Naive thymus-derived CD4-positive, alpha-beta T cell (primary cell): ENCODE measurements at regions of chr15 and their contacts with region 1.

Region 1: GRCh38 chr15:100341662-100342560 is at the start of gene ADAMTS17:
- DNase-seq: peak; percentile 80 to 96 (median 94)
- ATAC-seq: peak; percentile 98
- H3K4me3 ChIP-seq: peak within 1 kb of the TSS; percentile 69
- H3K4me3 Mint-ChIP-seq: peak within 1 kb of the TSS; percentile 59 to 88 (median 76)
- H3K27ac ChIP-seq: peak within 1 kb of the TSS; percentile 76
- H3K27ac Mint-ChIP-seq: peak within 1 kb of the TSS in 6 of 9 donors; percentile 6 to 76 (median 29)
- H3K4me1 ChIP-seq: peaks cover 4 to 6% of the 10 kb centered on the region in 2 donors
- H3K4me1 Mint-ChIP-seq: peaks cover 7 to 36% (median 28%) of the 10 kb centered on the region in 7 donors
- H3K27me3 ChIP-seq: no peaks in the 10 kb centered on the region
- H3K27me3 Mint-ChIP-seq: peaks cover 0 to 57% (median 4%) of the 10 kb centered on the region in 5 donors
- total RNA-seq, gene ADAMTS17: 2.0 to 13.5 (median 3.2) TPM

Region 2: DNA sequence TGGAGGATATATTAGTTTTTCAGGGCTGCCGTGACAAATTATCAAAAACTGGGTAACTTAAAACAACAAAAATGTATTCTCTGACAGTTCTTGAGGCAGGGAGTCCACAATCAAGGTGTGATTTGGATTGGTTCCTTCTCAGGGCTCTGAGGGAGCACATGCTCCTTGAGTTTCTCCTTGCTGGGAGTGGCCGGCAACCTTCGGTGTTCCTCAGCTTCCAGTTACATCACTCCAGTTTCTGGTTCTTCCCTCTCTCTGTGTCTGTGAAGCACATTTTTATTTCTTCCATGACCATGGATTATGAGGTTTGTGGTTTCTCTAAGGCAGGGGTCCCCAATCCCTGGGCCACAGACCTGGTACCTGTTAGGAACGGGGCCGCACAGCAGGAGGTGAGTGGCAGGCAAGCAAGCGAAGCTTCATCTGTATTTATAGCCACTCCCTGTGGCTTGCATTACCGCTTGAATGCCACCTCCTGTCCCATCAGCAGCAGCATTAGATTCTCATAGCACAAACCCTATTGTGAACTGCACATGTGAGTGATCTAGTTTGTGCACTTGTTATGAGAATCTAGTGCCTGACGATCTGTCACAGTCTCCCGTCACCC is 1066.3 kb before region 1 on chr15:
- CTCF ChIA-PET with region 1: interaction called, 12 read pairs
- POLR2A ChIA-PET with region 1: no interaction called
- intact Hi-C with region 1: loop called in 1 of 2 experiments (anchors 5 kb)
- DNase-seq: no peak
- ATAC-seq: no peak
- H3K4me3 ChIP-seq: no peak overlapping the region
- H3K4me3 Mint-ChIP-seq: no peak overlapping the region
- H3K27ac ChIP-seq: no peak overlapping the region
- H3K27ac Mint-ChIP-seq: peak overlapping the region in 1 of 9 donors; percentile 59
- H3K4me1 ChIP-seq: no peaks in the 10 kb centered on the region
- H3K4me1 Mint-ChIP-seq: peaks cover 7 to 35% (median 19%) of the 10 kb centered on the region in 7 donors
- H3K27me3 ChIP-seq: no peaks in the 10 kb centered on the region
- H3K27me3 Mint-ChIP-seq: no peaks in the 10 kb centered on the region

Region 3: GRCh38 chr15:99961011-99961441 is 380.9 kb before region 1 on chr15:
- CTCF ChIA-PET with region 1: no interaction called
- POLR2A ChIA-PET with region 1: no interaction called
- intact Hi-C with region 1: loop called in 1 of 2 experiments (anchors 1 kb)
- DNase-seq: peak in 1 of 9 donors; percentile 21
- ATAC-seq: no peak
- H3K4me3 ChIP-seq: no peak overlapping the region
- H3K4me3 Mint-ChIP-seq: no peak overlapping the region
- H3K27ac ChIP-seq: no peak overlapping the region
- H3K27ac Mint-ChIP-seq: no peak overlapping the region
- H3K4me1 ChIP-seq: no peaks in the 10 kb centered on the region
- H3K4me1 Mint-ChIP-seq: peaks cover 4 to 15% (median 11%) of the 10 kb centered on the region in 7 donors
- H3K27me3 ChIP-seq: no peaks in the 10 kb centered on the region
- H3K27me3 Mint-ChIP-seq: peaks cover 4 to 16% (median 14%) of the 10 kb centered on the region in 5 donors

Region 4: GRCh38 chr15:100211855-100212850 is 129.8 kb before region 1 on chr15:
- CTCF ChIA-PET with region 1: interaction called, 3 read pairs
- POLR2A ChIA-PET with region 1: no interaction called
- intact Hi-C with region 1: loop called in 1 of 2 experiments (anchors 10 kb)
- DNase-seq: no peak
- ATAC-seq: no peak
- H3K4me3 ChIP-seq: no peak overlapping the region
- H3K4me3 Mint-ChIP-seq: no peak overlapping the region
- H3K27ac ChIP-seq: no peak overlapping the region
- H3K27ac Mint-ChIP-seq: no peak overlapping the region
- H3K4me1 ChIP-seq: no peaks in the 10 kb centered on the region
- H3K4me1 Mint-ChIP-seq: peaks cover 0 to 7% (median 0%) of the 10 kb centered on the region in 7 donors
- H3K27me3 ChIP-seq: no peaks in the 10 kb centered on the region
- H3K27me3 Mint-ChIP-seq: no peaks in the 10 kb centered on the region

Region 5: DNA sequence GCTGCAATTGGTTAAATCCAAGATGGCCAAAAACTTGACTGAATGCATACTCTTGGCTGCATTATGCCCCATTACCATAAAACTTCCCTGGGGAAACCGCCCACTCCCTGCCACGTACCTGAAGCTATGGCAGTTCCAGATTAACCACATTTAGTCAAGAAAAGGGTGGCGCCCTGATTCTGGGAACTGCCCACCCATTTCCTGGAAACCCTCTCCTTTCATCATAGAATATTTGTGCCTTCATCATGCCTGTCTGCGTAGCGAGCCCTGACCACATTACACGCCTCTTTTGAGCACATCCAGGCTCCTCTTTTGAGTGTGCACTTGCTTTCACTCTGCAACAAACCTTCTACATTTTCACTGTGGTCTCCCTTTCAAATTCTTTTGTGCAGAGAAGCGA is 254.9 kb after region 1 on chr15:
- CTCF ChIA-PET with region 1: interaction called, 4 read pairs
- POLR2A ChIA-PET with region 1: interaction called, 4 read pairs
- intact Hi-C with region 1: loop called in 1 of 2 experiments (anchors 1 kb)
- DNase-seq: peak; percentile 52 to 97 (median 94)
- ATAC-seq: peak; percentile 93
- H3K4me3 ChIP-seq: peak overlapping the region; percentile 49
- H3K4me3 Mint-ChIP-seq: peak overlapping the region in 7 of 10 donors; percentile 69 to 87 (median 86)
- H3K27ac ChIP-seq: peak overlapping the region; percentile 91
- H3K27ac Mint-ChIP-seq: peak overlapping the region in 4 of 9 donors; percentile 96 to 98 (median 96)
- H3K4me1 ChIP-seq: peaks cover 52 to 82% of the 10 kb centered on the region in 2 donors
- H3K4me1 Mint-ChIP-seq: peaks cover 0 to 78% (median 51%) of the 10 kb centered on the region in 7 donors
- H3K27me3 ChIP-seq: no peaks in the 10 kb centered on the region
- H3K27me3 Mint-ChIP-seq: peaks cover 0 to 2% (median 0%) of the 10 kb centered on the region in 5 donors

Region 6: DNA sequence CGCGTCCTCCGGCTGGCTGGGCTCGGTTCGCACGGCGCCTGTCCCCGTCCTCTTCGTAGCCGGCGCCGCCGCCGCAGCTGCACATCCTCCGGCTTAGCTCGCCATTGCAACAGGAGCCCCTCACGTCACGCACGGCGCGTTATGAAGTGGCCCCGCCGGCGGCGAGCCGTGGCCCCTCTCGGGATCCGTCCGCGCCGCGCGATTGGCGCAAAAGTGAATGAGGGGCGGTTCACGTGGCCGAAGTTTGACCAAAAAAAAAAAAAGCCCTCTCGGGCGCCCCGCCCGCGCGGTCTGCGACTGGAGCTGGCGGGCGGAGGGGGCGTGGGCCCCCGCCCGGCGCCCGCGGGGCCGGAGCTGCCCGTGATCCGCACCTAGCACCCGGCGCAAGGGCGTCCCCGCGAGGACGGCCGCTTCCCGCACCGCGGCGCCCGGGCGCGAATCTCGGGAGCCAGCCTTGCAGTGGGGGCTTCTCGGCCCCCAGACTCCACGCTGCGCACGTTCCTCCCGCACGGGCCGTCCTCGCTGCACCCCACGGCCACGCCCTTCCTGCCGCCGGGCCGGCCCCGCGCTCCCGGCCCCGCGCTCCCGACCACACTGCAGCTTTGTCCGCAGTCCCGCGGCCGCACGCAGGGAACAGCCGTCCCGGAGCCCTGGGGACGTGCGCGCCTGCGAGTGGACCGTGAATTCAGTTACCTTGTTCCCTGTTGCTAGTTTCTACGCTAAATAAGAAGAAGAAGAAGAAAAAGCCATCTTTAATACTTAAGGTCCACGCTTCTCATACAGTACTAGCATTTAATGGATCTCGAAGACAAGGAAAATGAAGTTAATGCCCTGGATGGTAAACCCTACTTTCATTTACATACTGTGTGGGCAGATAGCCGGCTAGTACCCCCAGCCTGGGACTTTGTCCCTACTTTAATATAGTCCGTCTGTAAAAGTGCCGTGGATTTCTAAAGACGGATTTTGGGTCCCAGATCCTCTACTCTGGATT is 910.2 kb after region 1 on chr15 and contains the start of gene CHSY1:
- CTCF ChIA-PET with region 1: no interaction called
- POLR2A ChIA-PET with region 1: no interaction called
- intact Hi-C with region 1: loop called in 1 of 2 experiments (anchors 2 kb)
- DNase-seq: peak; percentile 71 to 91 (median 81)
- ATAC-seq: peak; percentile 91
- H3K4me3 ChIP-seq: peak within 1 kb of the TSS; percentile 64
- H3K4me3 Mint-ChIP-seq: peak within 1 kb of the TSS; percentile 84 to 97 (median 94)
- H3K27ac ChIP-seq: peak within 1 kb of the TSS; percentile 62
- H3K27ac Mint-ChIP-seq: peak within 1 kb of the TSS; percentile 77 to 96 (median 84)
- H3K4me1 ChIP-seq: peaks cover 17 to 21% of the 10 kb centered on the region in 2 donors
- H3K4me1 Mint-ChIP-seq: peaks cover 17 to 63% (median 37%) of the 10 kb centered on the region in 7 donors
- H3K27me3 ChIP-seq: no peaks in the 10 kb centered on the region
- H3K27me3 Mint-ChIP-seq: no peaks in the 10 kb centered on the region
- total RNA-seq, gene CHSY1: 8.9 to 47.0 (median 10.8) TPM